ENCODE measurements at regions of chr1 and their contacts with region 1.

Region 1: DNA sequence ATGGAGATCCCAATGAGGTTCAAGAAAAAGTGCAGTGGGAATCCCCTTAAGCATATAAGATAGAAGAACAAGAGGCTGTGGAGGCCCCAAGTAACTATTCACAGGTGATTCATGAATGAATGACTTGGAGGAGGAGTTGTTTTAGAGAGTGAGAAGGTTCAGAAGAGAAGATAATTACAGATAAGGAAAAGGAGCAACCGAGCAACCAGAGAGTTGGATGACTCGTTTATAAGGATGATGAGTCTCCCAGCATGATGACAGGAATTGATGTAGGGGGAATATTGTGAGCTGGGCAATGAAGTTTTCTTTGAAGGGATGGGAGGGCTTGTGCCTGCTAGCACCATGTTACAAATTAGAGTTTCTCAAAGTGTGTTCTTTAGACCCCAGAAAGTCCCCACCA is 9.8 kb downstream of the C8A start:
- DNase-seq: no peak
- H3K4me3 ChIP-seq: no peak overlapping the region
- H3K27ac ChIP-seq: no peak overlapping the region
- H3K4me1 ChIP-seq: no peaks in the 10 kb centered on the region
- H3K27me3 ChIP-seq: no peaks in the 10 kb centered on the region
- CTCF ChIP-seq: no peak
- POLR2A ChIP-seq: no peak

Region 2: GRCh38 chr1:55848906-55849305 is 1015.5 kb before region 1 on chr1:
- intact Hi-C with region 1: no loop called
- DNase-seq: no peak
- H3K4me3 ChIP-seq: no peak overlapping the region
- H3K27ac ChIP-seq: no peak overlapping the region
- H3K4me1 ChIP-seq: no peaks in the 10 kb centered on the region
- H3K27me3 ChIP-seq: no peaks in the 10 kb centered on the region
- CTCF ChIP-seq: no peak
- POLR2A ChIP-seq: no peak

Region 3: GRCh38 chr1:56803561-56804156 is 60.8 kb before region 1 on chr1:
- intact Hi-C with region 1: loop called (anchors 5 kb)
- DNase-seq: no peak
- H3K4me3 ChIP-seq: no peak overlapping the region
- H3K27ac ChIP-seq: no peak overlapping the region
- H3K4me1 ChIP-seq: no peaks in the 10 kb centered on the region
- H3K27me3 ChIP-seq: no peaks in the 10 kb centered on the region
- CTCF ChIP-seq: peak in 1 of 3 donors; percentile 24
- POLR2A ChIP-seq: no peak